IMR-90 (cell line): ENCODE measurements at regions of chr22 and their contacts with region 1.

Region 1: GRCh38 chr22:37601540-37602442 is 6.8 kb upstream of the GGA1 start:
- DNase-seq: peak; percentile 33
- ATAC-seq: peak; percentile 83
- H3K4me3 ChIP-seq: no peak overlapping the region
- H3K27ac ChIP-seq: no peak overlapping the region
- H3K4me1 ChIP-seq: no peaks in the 10 kb centered on the region
- H3K27me3 ChIP-seq: peaks cover 11% of the 10 kb centered on the region
- CTCF ChIP-seq: no peak
- POLR2A ChIP-seq: no peak
- RAD21 ChIP-seq: no peak

Region 2: DNA sequence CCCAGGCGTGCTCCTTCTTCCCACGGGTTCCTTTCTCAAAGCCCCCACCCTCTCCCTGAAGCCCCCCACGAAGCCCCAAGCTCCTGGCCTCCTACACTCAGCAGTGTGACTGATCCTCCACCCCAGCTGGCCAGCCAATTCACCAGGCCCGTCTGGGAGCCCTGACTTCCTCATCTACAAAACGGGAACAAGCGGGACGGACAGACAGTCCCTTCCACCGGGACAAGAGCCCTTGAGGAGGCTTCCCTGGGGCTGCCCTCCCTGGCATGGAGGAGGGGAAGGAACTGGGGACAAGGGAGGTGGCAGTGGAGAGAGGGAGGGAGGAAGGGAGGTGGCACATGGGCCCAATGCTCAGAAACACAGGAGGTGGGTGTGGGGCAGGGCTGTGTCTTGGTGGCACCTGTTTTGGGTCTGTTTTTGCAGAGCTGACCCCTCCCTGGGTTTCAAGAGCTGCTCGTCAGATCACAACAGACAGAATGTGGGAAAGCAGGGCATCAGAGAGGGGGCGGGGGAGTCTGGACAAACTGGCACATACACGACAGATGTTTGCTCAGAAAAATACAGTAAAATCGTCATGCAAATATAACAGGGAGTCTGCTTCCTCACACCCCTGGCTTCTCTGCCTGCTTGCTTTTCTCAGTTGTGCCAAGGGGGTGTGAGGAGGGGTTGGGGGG is 231.3 kb before region 1 on chr22:
- CTCF ChIA-PET with region 1: no interaction called
- POLR2A ChIA-PET with region 1: no interaction called
- dilution Hi-C with region 1: no loop called
- in situ Hi-C with region 1: no loop called
- intact Hi-C with region 1: no loop called
- DNase-seq: no peak
- ATAC-seq: no peak
- H3K4me3 ChIP-seq: no peak overlapping the region
- H3K27ac ChIP-seq: no peak overlapping the region
- H3K4me1 ChIP-seq: no peaks in the 10 kb centered on the region
- H3K27me3 ChIP-seq: no peaks in the 10 kb centered on the region
- CTCF ChIP-seq: no peak
- POLR2A ChIP-seq: no peak
- RAD21 ChIP-seq: no peak

Region 3: DNA sequence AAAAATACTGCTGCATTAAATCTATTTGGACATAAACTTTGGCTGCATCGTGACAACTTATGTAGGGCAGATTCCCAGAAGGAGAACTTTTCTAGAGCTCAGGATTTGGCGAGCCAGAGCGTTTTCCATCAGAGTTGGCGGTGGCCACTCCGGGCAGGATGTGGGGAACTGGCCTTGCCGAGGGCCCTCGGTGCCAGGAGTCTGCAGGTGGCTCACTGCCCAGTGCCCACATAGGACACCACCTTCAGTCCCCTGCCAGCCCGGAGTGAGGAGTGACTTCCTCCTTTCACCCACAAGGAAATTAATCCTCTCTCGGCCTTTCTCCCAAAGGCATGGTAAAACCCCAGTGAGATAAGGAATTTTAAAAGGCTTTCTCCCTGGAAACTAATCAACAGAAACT is 20.3 kb before region 1 on chr22:
- CTCF ChIA-PET with region 1: interaction called, 5 read pairs
- POLR2A ChIA-PET with region 1: interaction called, 11 read pairs
- dilution Hi-C with region 1: no loop called
- in situ Hi-C with region 1: no loop called
- intact Hi-C with region 1: no loop called
- DNase-seq: no peak
- ATAC-seq: no peak
- H3K4me3 ChIP-seq: no peak overlapping the region
- H3K27ac ChIP-seq: no peak overlapping the region
- H3K4me1 ChIP-seq: no peaks in the 10 kb centered on the region
- H3K27me3 ChIP-seq: peaks cover 8% of the 10 kb centered on the region; the same call in 1 of the 2 replicates
- CTCF ChIP-seq: no peak
- POLR2A ChIP-seq: no peak
- RAD21 ChIP-seq: no peak

Region 4: DNA sequence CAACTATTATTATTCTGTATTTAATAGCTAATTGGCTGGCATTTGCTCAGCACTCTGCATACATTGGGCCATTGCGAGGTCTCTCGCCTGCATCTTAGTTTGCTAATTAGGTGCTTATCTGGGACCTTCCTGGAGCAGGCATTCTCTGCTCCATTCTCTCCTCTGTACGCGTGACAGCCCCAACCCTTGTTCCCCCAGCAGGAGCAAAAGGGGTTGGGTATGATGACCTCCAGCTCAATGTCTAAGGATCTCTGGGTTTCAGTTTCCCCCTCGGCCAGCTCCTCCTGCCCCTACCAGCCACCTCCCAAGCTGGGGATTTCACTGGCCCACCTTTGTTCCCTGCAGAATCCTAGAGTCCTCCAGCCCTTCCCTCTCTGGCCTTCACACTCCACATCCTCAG is 12.2 kb before region 1 on chr22:
- CTCF ChIA-PET with region 1: interaction called, 18 read pairs
- POLR2A ChIA-PET with region 1: no interaction called
- dilution Hi-C with region 1: no loop called
- in situ Hi-C with region 1: no loop called
- intact Hi-C with region 1: no loop called
- DNase-seq: no peak
- ATAC-seq: no peak
- H3K4me3 ChIP-seq: no peak overlapping the region
- H3K27ac ChIP-seq: no peak overlapping the region
- H3K4me1 ChIP-seq: no peaks in the 10 kb centered on the region; the same call in 1 of the 2 replicates
- H3K27me3 ChIP-seq: peaks cover 17% of the 10 kb centered on the region
- CTCF ChIP-seq: no peak
- POLR2A ChIP-seq: no peak
- RAD21 ChIP-seq: no peak